Naive thymus-derived CD4-positive, alpha-beta T cell (primary cell): ENCODE measurements at regions of chr1 and their contacts with region 1.

Region 1: DNA sequence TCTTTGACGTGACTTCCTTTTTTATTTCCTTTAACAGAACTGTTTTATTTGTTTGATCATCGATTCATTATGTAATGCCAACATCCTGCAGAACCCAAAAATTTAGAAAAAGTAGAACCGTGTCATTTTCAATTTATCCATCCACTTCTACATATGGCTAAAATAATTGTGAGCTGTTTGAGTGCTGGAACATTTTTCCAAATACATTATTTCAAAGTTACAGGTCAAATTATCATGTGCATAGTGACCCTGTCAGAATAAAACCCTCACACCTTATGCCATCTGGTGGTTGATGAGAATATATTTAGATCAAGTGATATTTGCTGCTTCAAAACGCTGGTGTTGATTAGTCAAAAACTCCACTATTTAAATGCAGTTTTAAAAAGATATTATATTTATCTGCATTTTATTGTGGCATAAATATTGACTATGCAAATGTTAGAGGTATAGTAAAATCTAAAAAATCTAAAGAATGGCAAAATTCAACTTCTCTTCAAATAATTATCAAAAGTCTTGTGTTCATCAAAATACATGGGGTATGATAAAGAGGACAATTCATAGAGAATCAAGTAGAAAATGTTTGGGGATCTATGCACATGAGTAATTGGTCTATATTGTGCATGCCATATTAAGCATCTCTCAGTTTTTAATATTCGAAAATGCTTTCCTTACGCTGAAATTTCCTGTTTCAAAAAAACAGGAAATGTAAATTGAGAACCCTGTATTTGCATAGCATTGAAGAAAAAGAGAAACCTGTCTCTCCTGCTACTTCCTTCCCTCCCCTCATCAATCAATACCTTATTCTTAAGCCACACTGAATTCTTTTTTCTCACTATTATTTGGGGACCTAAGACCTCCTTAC is 39.7 kb downstream of the UBE2U start:
- DNase-seq: peak in 6 of 9 donors; percentile 1 to 50 (median 36)
- ATAC-seq: peak; percentile 56
- H3K4me3 ChIP-seq: peak overlapping the region; percentile 15
- H3K4me3 Mint-ChIP-seq: peak overlapping the region; percentile 53 to 87 (median 74)
- H3K27ac ChIP-seq: peak overlapping the region; percentile 8
- H3K27ac Mint-ChIP-seq: peak overlapping the region; percentile 5 to 78 (median 69)
- H3K4me1 ChIP-seq: peaks cover 0 to 13% of the 10 kb centered on the region in 2 donors
- H3K4me1 Mint-ChIP-seq: peaks cover 11 to 38% (median 28%) of the 10 kb centered on the region in 7 donors
- H3K27me3 ChIP-seq: no peaks in the 10 kb centered on the region
- H3K27me3 Mint-ChIP-seq: peaks cover 11 to 15% (median 12%) of the 10 kb centered on the region in 5 donors

Region 2: GRCh38 chr1:63189677-63190076 is 1053.4 kb before region 1 on chr1:
- CTCF ChIA-PET with region 1: no interaction called
- POLR2A ChIA-PET with region 1: no interaction called
- intact Hi-C with region 1: loop called in 1 of 2 experiments (anchors 10 kb)
- DNase-seq: no peak
- ATAC-seq: no peak
- H3K4me3 ChIP-seq: no peak overlapping the region
- H3K4me3 Mint-ChIP-seq: no peak overlapping the region
- H3K27ac ChIP-seq: no peak overlapping the region
- H3K27ac Mint-ChIP-seq: no peak overlapping the region
- H3K4me1 ChIP-seq: no peaks in the 10 kb centered on the region
- H3K4me1 Mint-ChIP-seq: no peaks in the 10 kb centered on the region
- H3K27me3 ChIP-seq: no peaks in the 10 kb centered on the region
- H3K27me3 Mint-ChIP-seq: peaks cover 0 to 11% (median 9%) of the 10 kb centered on the region in 5 donors

Region 3: GRCh38 chr1:63327417-63328139 is 915.5 kb before region 1 on chr1:
- CTCF ChIA-PET with region 1: no interaction called
- POLR2A ChIA-PET with region 1: no interaction called
- intact Hi-C with region 1: loop called (anchors 5 kb)
- DNase-seq: peak in 5 of 9 donors; percentile 17 to 68 (median 25)
- ATAC-seq: peak; percentile 52
- H3K4me3 ChIP-seq: no peak overlapping the region
- H3K4me3 Mint-ChIP-seq: peak overlapping the region in 7 of 10 donors; percentile 11 to 53 (median 32)
- H3K27ac ChIP-seq: no peak overlapping the region
- H3K27ac Mint-ChIP-seq: peak overlapping the region in 7 of 9 donors; percentile 33 to 77 (median 50)
- H3K4me1 ChIP-seq: peaks cover 11 to 15% of the 10 kb centered on the region in 2 donors
- H3K4me1 Mint-ChIP-seq: peaks cover 9 to 48% (median 36%) of the 10 kb centered on the region in 7 donors
- H3K27me3 ChIP-seq: peaks cover 39 to 65% of the 10 kb centered on the region in 2 donors
- H3K27me3 Mint-ChIP-seq: peaks cover 68 to 79% (median 79%) of the 10 kb centered on the region in 5 donors

Region 4: GRCh38 chr1:63575340-63575826 is 667.7 kb before region 1 on chr1:
- CTCF ChIA-PET with region 1: interaction called, 7 read pairs
- POLR2A ChIA-PET with region 1: no interaction called
- intact Hi-C with region 1: loop called (anchors 1 kb)
- DNase-seq: peak in 6 of 9 donors; percentile 12 to 40 (median 24)
- ATAC-seq: peak; percentile 52
- H3K4me3 ChIP-seq: no peak overlapping the region
- H3K4me3 Mint-ChIP-seq: no peak overlapping the region
- H3K27ac ChIP-seq: no peak overlapping the region
- H3K27ac Mint-ChIP-seq: no peak overlapping the region
- H3K4me1 ChIP-seq: no peaks in the 10 kb centered on the region
- H3K4me1 Mint-ChIP-seq: no peaks in the 10 kb centered on the region
- H3K27me3 ChIP-seq: no peaks in the 10 kb centered on the region
- H3K27me3 Mint-ChIP-seq: no peaks in the 10 kb centered on the region

Region 5: GRCh38 chr1:63691701-63692425 is 551.3 kb before region 1 on chr1:
- CTCF ChIA-PET with region 1: interaction called, 21 read pairs
- POLR2A ChIA-PET with region 1: no interaction called
- intact Hi-C with region 1: loop called (anchors 1 kb)
- DNase-seq: peak in 7 of 9 donors; percentile 4 to 47 (median 41)
- ATAC-seq: peak; percentile 49
- H3K4me3 ChIP-seq: no peak overlapping the region
- H3K4me3 Mint-ChIP-seq: no peak overlapping the region
- H3K27ac ChIP-seq: no peak overlapping the region
- H3K27ac Mint-ChIP-seq: no peak overlapping the region
- H3K4me1 ChIP-seq: no peaks in the 10 kb centered on the region
- H3K4me1 Mint-ChIP-seq: peaks cover 0 to 8% (median 6%) of the 10 kb centered on the region in 7 donors
- H3K27me3 ChIP-seq: no peaks in the 10 kb centered on the region
- H3K27me3 Mint-ChIP-seq: peaks cover 0 to 18% (median under 1%) of the 10 kb centered on the region in 5 donors

Region 6: GRCh38 chr1:63935143-63935542 is 308.0 kb before region 1 on chr1:
- CTCF ChIA-PET with region 1: no interaction called
- POLR2A ChIA-PET with region 1: no interaction called
- intact Hi-C with region 1: loop called in 1 of 2 experiments (anchors 1 kb)
- DNase-seq: no peak
- ATAC-seq: no peak
- H3K4me3 ChIP-seq: no peak overlapping the region
- H3K4me3 Mint-ChIP-seq: no peak overlapping the region
- H3K27ac ChIP-seq: no peak overlapping the region
- H3K27ac Mint-ChIP-seq: no peak overlapping the region
- H3K4me1 ChIP-seq: no peaks in the 10 kb centered on the region
- H3K4me1 Mint-ChIP-seq: no peaks in the 10 kb centered on the region
- H3K27me3 ChIP-seq: no peaks in the 10 kb centered on the region
- H3K27me3 Mint-ChIP-seq: peaks cover 0 to 8% (median 2%) of the 10 kb centered on the region in 5 donors

Region 7: DNA sequence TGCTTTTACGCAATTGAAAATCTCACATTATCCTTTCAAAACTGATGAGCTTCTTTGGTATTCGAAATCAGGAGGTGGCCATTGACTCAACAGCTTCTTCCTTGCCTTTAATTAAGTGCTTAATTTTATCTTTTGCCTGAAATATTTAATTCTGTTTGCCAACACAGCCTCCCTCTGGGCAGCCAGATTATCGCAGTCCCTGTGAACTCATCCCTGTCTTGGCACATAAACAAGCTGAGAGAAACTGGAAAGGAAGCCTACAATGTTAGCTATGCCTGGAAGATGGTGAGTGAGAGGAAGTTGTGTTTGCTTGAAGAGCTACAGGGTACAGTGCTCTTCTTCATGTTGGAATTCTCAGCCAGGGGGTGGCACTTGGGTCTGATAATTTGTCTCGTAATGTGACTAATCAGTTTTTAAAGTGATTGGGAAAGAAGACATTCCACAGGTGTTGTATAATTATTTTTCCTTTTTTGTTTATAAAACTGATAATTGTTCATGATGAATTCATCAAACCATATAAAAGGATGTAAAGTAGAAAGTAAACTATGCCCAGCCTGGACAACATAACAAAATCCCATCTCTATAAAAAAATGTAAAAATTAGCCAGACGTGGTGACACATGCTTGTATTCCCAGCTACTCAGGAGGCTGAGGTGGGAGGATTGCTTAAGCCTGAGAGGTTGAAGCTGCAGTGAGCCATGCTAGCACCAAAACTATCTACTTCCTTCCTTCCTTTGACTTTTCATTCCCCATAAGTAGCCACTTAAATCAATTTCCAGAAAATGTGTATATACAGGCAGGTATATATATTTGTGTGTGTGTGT is 411.6 kb after region 1 on chr1:
- CTCF ChIA-PET with region 1: no interaction called
- POLR2A ChIA-PET with region 1: no interaction called
- intact Hi-C with region 1: no loop called
- DNase-seq: no peak
- ATAC-seq: no peak
- H3K4me3 ChIP-seq: no peak overlapping the region
- H3K4me3 Mint-ChIP-seq: no peak overlapping the region
- H3K27ac ChIP-seq: no peak overlapping the region
- H3K27ac Mint-ChIP-seq: no peak overlapping the region
- H3K4me1 ChIP-seq: no peaks in the 10 kb centered on the region
- H3K4me1 Mint-ChIP-seq: no peaks in the 10 kb centered on the region
- H3K27me3 ChIP-seq: no peaks in the 10 kb centered on the region
- H3K27me3 Mint-ChIP-seq: peaks cover 0 to 5% (median 0%) of the 10 kb centered on the region in 5 donors